Left ventricle myocardium superior (tissue), 1 donor: ENCODE measurements at regions of chr5 and their contacts with region 1.

Region 1: DNA sequence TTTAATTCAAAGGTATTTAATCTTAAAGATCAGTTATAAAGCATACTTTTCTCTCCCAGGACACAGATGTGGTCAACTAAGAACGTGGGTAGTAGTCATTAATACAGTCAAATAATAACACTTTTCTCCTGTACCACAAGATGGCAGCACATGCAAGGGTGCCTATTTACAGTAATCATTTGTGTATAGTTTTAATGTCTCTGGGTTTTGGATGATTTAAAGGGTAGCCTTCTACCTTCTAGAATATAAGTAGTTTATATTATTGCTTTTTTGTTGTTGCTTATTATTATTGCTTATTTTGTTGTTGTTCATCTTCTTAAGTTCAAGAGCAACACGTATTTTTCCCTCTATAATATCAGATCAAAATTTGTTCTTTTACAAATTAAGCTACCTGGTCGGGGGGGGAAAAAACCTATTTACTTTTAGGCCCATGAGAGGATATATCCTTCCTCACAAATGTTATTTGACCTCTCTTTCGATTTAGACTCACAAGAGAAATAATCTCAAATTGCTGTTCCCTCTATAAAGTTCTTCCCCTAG is 59.6 kb upstream of the SLC27A6 start:
- DNase-seq: no peak
- ATAC-seq: peak; percentile 78

Region 2: DNA sequence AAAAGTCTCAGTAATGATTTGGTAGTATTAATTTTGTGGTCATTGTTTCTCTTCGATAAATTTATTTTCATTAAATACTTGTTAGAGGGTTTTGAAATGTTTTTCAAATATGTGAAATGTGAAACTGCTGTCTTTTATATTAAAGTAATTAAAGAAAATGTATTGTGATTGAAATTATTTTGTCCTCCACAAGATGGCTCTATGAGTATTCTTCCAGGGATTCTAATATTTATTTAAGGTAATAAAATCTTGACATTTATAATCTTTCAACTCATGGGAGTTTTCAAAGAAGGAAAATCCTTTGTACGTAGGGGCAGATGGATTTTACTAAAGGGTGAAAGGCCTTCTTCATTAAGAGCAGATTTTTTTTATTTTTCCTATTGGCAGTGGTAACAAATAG is 208.2 kb after region 1 on chr5:
- intact Hi-C with region 1: loop called (anchors 10 kb)
- DNase-seq: no peak
- ATAC-seq: no peak